Activated T-helper 1 cell treated with anti-CD3 and anti-CD28 coated beads, Interleukin-12 subunit alpha, Interleukin-12 subunit beta, Interleukin-2, Interleukin-4 antibody, amounts not matched to agents 30 ng/mL and 10 ng/mL and 1 ng/mL, durations not matched to agents 14 hours and 24 hours and 36 hours (primary cell): ENCODE measurements at regions of chr1 and their contacts with region 1.

Region 1: DNA sequence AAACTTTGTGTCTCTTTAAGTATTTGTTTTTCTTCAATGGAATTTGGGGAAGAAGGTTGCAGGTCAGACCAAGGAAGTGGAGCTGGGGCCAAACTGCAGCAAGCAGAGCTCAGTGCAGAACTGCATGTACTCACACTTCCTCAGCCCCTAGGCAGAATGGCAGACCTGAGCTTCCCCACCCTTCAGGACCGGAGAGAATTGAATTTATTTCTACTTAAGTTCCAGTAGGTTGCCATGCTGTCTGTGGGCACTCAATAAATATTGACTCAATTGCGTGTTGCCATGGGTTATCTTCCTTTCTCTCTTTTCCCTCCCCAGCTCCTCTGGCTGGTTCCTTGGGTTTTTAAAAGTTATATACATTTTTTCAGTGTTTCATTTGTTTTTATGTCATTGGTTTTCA is 173.5 kb downstream of the PTGER3 start:
- DNase-seq: no peak
- H3K4me3 Mint-ChIP-seq: no peak overlapping the region
- H3K27ac Mint-ChIP-seq: no peak overlapping the region
- H3K4me1 Mint-ChIP-seq: no peaks in the 10 kb centered on the region
- H3K27me3 Mint-ChIP-seq: peaks cover 3% of the 10 kb centered on the region

Region 2: DNA sequence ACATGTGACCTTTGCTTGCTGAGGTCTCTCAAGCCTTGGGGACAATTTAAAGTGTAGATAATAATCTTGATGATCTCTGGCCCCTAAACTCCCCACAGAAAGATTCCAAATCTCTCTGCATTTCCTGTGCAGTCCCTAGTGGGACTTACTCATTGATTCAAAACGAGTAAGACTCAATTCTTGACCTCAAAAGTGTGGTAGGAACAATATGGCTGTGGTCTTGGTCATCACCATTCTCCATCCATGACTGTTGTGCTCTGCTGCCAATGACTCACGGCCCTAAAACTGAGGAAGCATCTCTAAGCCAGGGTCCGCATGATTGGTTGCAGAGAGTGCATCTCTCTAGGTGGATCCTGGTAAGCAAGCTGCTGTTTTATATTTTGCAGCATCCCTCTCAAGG is 94.5 kb before region 1 on chr1:
- intact Hi-C with region 1: loop called (anchors 5 kb)
- DNase-seq: no peak
- H3K4me3 Mint-ChIP-seq: no peak overlapping the region
- H3K27ac Mint-ChIP-seq: no peak overlapping the region
- H3K4me1 Mint-ChIP-seq: no peaks in the 10 kb centered on the region
- H3K27me3 Mint-ChIP-seq: peaks cover 5% of the 10 kb centered on the region